Cardiac septum (tissue), 1 donor: ENCODE measurements at regions of chr22 and their contacts with region 1.

Region 1: DNA sequence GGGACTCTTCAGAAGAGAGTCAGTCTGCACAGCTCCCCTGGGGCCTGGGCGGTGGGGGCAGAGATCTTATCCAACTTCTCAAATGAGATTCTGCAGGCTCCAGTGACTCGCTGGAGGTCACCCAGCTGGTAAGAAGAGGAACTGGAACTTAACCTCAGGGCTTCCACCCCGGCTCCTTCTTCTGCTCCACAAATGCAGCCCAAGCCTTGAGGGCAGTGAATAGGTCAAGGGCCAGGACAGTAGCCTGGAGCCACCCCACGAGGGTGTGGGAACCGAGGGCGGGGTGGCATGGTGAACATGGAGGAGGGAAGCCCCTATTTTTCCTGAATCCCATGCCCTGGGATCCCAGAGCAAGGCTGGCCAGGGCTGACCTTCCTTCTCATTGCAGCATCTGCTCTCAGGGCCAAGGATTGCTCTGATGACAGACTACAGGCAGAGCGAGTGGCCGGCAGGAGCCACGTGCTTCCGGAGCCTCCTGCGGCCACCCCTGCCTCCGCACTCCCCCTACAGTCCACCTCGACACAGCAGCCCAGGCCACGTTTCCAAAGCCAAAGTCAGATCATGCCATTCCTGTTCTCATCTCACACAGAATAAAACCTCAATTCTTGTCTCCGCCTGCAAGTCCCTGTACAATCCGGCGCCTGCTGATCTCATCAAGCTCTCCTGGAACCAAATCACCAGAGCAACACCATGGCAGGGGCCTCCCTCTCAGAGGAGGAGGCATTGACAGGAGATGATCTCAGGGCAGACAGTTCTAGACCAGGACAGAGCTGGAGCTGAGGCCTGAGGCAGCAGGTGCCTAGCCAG is 21.1 kb upstream of the UPK3A start:
- DNase-seq: no peak

Region 2: GRCh38 chr22:45101515-45102227 is 162.0 kb before region 1 on chr22:
- intact Hi-C with region 1: loop called (anchors 2 kb)
- DNase-seq: peak; percentile 87

Region 3: DNA sequence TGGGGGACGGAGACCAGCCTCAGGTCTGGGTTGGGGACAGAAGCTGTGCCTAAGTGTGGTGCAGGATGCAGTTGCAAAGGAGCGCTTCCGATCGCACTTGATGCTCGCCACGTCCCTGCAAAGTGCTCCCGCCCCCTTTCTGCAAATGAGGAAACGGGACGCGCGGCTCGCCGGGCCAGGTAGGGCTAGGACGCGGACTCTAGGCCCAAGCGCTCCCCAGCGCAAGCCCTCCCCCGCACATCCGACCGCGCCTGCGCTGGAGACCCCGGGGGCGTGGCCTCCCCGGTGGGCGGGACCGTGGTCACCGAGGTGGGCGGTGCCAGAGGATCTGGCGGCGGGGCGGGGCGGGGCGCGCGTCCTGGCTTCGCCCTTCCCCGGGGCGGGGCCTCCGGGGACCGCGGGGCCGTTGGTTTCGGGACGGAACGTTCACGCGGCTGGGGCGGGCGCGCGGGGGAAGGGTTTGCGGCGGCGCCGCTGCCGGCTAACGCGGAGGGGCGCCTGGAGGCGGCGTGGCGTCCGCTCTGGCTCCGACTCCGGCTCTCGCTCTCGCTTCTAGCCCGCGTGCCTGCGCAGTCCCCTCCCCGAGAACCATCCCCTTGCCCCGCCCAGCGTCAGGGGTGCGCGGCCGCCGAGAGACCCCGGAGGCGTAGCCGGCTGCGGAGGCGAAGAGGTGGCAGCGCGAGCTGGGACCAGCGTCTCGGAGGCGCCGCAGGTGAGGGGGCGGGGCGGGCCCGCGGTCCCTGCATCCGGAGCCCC is 46.0 kb after region 1 on chr22 and contains the start of gene FAM118A:
- intact Hi-C with region 1: no loop called
- DNase-seq: peak; percentile 99
- total RNA-seq, gene FAM118A: 15.6 TPM